ENCODE measurements at regions of chr12 and their contacts with region 1.

Region 1: GRCh38 chr12:92539113-92539749 is 163.6 kb upstream of the PLEKHG7 start:
- DNase-seq: peak; percentile 95
- H3K4me3 ChIP-seq: no peak overlapping the region
- H3K27ac ChIP-seq: peak overlapping the region; percentile 70
- H3K4me1 ChIP-seq: peaks cover 32% of the 10 kb centered on the region
- H3K27me3 ChIP-seq: no peaks in the 10 kb centered on the region
- CTCF ChIP-seq: no peak
- POLR2A ChIP-seq: no peak

Region 2: DNA sequence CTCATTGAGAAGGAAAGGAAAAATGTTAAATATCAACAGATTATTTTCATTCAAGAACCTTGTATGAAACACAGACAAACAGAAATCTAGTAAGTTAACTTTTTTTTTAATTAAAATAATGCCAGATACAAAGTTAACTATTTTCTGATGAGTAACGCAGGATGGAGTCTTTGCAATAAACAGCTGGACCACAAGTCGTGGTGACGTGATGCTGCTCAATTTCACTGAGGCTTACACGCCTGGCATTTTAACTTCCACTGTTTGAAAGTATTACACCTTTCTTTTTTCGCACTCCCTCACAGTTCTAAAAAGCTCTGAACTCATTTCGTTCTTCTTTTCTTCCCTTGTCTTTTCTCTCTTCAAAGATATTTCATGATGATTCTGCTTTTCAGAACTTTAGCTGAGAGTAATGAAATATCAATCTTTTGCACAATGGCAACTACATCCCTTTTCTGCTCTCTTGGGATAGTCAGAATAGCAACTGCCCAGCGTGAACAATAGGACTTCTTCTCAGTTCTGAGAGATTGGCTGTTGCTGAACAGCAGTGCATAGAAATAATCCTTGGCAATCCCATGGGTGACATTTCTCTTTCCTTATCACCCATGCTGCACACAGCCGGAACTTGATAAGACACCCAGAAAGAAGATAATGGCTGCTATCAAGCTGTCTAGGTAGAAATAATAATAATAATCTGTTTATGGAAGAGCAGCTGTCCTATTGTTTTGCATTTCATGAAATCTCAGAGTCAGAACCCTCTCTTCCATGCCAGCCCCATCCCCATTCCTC is 554.0 kb before region 1 on chr12:
- CTCF ChIA-PET with region 1: no interaction called
- POLR2A ChIA-PET with region 1: no interaction called
- dilution Hi-C with region 1: no loop called
- intact Hi-C with region 1: loop called (anchors 1 kb)
- DNase-seq: peak; percentile 13
- H3K4me3 ChIP-seq: no peak overlapping the region
- H3K27ac ChIP-seq: no peak overlapping the region
- H3K4me1 ChIP-seq: peaks cover 55% of the 10 kb centered on the region
- H3K27me3 ChIP-seq: no peaks in the 10 kb centered on the region
- CTCF ChIP-seq: no peak
- POLR2A ChIP-seq: no peak

Region 3: GRCh38 chr12:92078167-92079053 is 460.8 kb before region 1 on chr12:
- CTCF ChIA-PET with region 1: no interaction called
- POLR2A ChIA-PET with region 1: no interaction called
- dilution Hi-C with region 1: no loop called
- intact Hi-C with region 1: no loop called
- DNase-seq: peak; percentile 42
- H3K4me3 ChIP-seq: no peak overlapping the region
- H3K27ac ChIP-seq: no peak overlapping the region
- H3K4me1 ChIP-seq: no peaks in the 10 kb centered on the region
- H3K27me3 ChIP-seq: no peaks in the 10 kb centered on the region
- CTCF ChIP-seq: no peak
- POLR2A ChIP-seq: no peak

Region 4: GRCh38 chr12:92218394-92219077 is 320.7 kb before region 1 on chr12:
- CTCF ChIA-PET with region 1: no interaction called
- POLR2A ChIA-PET with region 1: no interaction called
- dilution Hi-C with region 1: no loop called
- intact Hi-C with region 1: loop called (anchors 1 kb)
- DNase-seq: no peak
- H3K4me3 ChIP-seq: no peak overlapping the region
- H3K27ac ChIP-seq: no peak overlapping the region
- H3K4me1 ChIP-seq: peaks cover 9% of the 10 kb centered on the region
- H3K27me3 ChIP-seq: no peaks in the 10 kb centered on the region
- CTCF ChIP-seq: no peak
- POLR2A ChIP-seq: no peak

Region 5: GRCh38 chr12:92505254-92506231 is 33.7 kb before region 1 on chr12:
- CTCF ChIA-PET with region 1: no interaction called
- POLR2A ChIA-PET with region 1: no interaction called
- dilution Hi-C with region 1: no loop called
- intact Hi-C with region 1: loop called (anchors 1 kb)
- DNase-seq: peak; percentile 70
- H3K4me3 ChIP-seq: peak overlapping the region in 1 of 3 experiments; percentile 30
- H3K27ac ChIP-seq: peak overlapping the region; percentile 13
- H3K4me1 ChIP-seq: peaks cover 6% of the 10 kb centered on the region
- H3K27me3 ChIP-seq: peaks cover 0 to 5% of the 10 kb centered on the region in 2 experiments
- CTCF ChIP-seq: no peak
- POLR2A ChIP-seq: no peak

Region 6: DNA sequence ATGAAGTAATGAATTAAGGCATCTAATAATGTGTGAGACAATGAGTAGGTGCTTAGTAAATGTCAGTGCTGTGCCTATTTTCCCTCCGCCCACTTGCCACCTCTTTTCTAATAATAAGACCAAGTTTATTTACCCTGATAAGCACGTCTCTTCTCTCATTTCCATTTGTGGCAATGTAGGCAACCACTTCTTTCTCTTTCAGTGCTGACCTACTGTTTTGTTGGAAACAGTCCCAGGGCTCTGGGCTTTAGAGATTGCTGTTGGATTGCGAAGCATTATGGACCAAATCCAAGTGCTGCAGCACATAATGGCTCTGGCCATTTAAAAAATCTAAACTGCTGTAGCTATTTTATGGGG is 22.3 kb after region 1 on chr12:
- CTCF ChIA-PET with region 1: no interaction called
- POLR2A ChIA-PET with region 1: no interaction called
- dilution Hi-C with region 1: no loop called
- intact Hi-C with region 1: no loop called
- DNase-seq: peak; percentile 72
- H3K4me3 ChIP-seq: no peak overlapping the region
- H3K27ac ChIP-seq: no peak overlapping the region
- H3K4me1 ChIP-seq: no peaks in the 10 kb centered on the region
- H3K27me3 ChIP-seq: no peaks in the 10 kb centered on the region
- CTCF ChIP-seq: no peak
- POLR2A ChIP-seq: no peak

Region 7: DNA sequence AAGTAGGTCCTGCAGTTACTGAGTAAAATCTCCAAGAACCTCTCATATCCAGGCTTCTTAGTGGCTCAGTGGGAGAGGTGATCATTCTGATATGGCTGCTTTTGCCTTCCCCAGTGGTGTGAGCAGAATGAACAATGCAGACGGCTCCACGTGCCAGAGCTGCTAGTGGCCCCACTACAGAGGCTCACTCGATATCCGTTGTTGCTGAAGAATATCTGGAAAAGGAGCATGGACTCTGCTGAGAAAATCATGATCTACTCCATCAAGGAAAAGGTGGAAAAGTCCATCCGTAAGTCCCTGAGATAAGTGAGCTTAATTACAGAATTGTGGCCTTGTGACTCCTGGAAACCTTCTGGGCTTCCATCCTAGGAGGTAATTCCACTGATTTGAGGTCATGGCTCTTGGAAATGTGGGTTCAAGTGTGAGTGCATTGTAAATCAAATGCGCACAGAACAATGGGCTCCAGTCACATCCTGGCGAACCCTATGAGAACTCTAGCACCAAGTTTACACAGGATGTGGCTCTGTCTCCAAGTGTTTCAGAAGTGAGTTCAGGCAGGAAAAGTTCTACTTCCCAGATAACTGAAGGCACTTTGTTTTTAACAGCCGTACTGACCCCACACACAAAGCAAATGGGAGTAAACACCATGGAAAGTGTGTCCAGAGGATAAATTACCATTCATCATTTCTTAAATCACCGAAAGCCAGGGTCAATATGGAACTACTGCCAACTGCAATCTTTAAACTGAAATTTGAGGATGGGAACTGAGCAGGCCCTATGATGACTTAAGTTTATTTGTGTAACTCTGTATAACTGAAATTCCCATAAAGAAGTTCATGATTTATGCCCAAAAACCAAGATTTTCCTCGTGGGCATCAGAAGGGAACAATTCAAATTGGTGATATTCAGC is 215.0 kb after region 1 on chr12:
- CTCF ChIA-PET with region 1: no interaction called
- POLR2A ChIA-PET with region 1: no interaction called
- dilution Hi-C with region 1: no loop called
- intact Hi-C with region 1: loop called (anchors 1 kb)
- DNase-seq: peak; percentile 100
- H3K4me3 ChIP-seq: no peak overlapping the region
- H3K27ac ChIP-seq: peak overlapping the region; percentile 72
- H3K4me1 ChIP-seq: peaks cover 28% of the 10 kb centered on the region
- H3K27me3 ChIP-seq: no peaks in the 10 kb centered on the region
- CTCF ChIP-seq: no peak
- POLR2A ChIP-seq: no peak